K562 (cell line): ENCODE measurements at regions of chr15 and their contacts with region 1.

Region 1: GRCh38 chr15:40463886-40464545 is 6.8 kb upstream of the CHST14 start:
- DNase-seq: no peak
- ATAC-seq: no peak
- H3K4me3 ChIP-seq: no peak overlapping the region
- H3K27ac ChIP-seq: no peak overlapping the region
- H3K4me1 ChIP-seq: peaks cover 15 to 28% of the 10 kb centered on the region in 2 experiments
- H3K27me3 ChIP-seq: no peaks in the 10 kb centered on the region
- CTCF ChIP-seq: no peak
- EP300 ChIP-seq: no peak
- POLR2A ChIP-seq: no peak
- RAD21 ChIP-seq: no peak

Region 2: DNA sequence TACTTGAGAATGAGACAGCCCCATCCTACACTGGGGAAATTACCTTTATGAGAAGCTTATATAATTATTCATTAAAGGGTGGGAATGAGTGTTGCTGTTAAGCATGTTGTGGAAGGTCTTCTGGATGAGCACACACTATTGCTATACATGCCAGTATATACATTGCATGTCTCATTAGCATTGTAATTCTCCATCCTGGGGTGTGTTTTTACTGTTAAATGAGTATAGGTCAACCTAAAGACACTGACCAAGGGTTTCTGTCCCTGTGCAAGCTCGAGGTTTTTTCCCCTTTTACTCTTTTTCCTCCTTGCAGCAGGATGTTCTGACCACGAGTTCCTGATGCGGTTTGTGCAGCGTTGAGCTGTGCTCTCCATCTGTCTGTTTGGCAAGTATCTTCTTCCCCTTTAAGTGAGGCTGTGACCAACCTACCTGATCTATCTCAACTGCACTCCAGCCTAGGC is 65.6 kb before region 1 on chr15:
- CTCF ChIA-PET with region 1: no interaction called
- POLR2A ChIA-PET with region 1: no interaction called
- in situ Hi-C with region 1: no loop called
- intact Hi-C with region 1: no loop called
- DNase-seq: no peak
- ATAC-seq: no peak; the same call in 2 of the 3 replicates
- H3K4me3 ChIP-seq: no peak overlapping the region
- H3K27ac ChIP-seq: no peak overlapping the region
- H3K4me1 ChIP-seq: no peaks in the 10 kb centered on the region
- H3K27me3 ChIP-seq: no peaks in the 10 kb centered on the region
- CTCF ChIP-seq: no peak
- EP300 ChIP-seq: no peak
- POLR2A ChIP-seq: no peak
- RAD21 ChIP-seq: no peak

Region 3: GRCh38 chr15:40449275-40449674 is 14.7 kb before region 1 on chr15:
- CTCF ChIA-PET with region 1: no interaction called
- POLR2A ChIA-PET with region 1: interaction called, 15 read pairs
- in situ Hi-C with region 1: no loop called
- intact Hi-C with region 1: no loop called
- DNase-seq: no peak
- ATAC-seq: no peak
- H3K4me3 ChIP-seq: no peak overlapping the region
- H3K27ac ChIP-seq: no peak overlapping the region
- H3K4me1 ChIP-seq: peaks cover 21 to 30% of the 10 kb centered on the region in 2 experiments
- H3K27me3 ChIP-seq: no peaks in the 10 kb centered on the region
- CTCF ChIP-seq: no peak
- EP300 ChIP-seq: no peak
- POLR2A ChIP-seq: no peak
- RAD21 ChIP-seq: no peak